Activated CD4-positive, alpha-beta T cell treated with anti-CD3 and anti-CD28 coated beads for 36 hours (primary cell): ENCODE measurements at regions of chr15 and their contacts with region 1.

Region 1: DNA sequence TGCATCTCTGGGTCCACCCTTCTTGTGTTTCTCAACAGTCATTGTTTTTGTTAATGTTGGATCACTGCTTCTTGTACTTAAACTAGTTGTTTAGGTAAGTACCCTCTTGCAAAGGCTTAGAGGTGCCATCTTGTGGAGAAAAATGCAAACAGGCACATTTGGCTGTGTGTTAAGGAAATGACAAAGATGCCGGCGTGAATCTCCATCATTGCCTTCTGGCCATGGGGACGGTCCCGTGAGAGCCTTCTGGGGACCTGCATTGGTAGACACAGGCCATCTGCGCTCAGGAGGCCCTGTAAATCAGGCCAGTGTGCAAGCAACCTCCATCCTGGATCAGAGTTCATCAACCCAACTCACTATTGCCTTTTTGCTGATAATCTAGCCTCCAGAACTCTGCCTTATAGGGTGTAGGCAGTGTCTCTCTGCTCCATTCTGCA is 158.6 kb upstream of the NR2E3 start:
- DNase-seq: peak; percentile 33
- ATAC-seq: no peak
- H3K4me3 Mint-ChIP-seq: no peak overlapping the region
- H3K27ac Mint-ChIP-seq: no peak overlapping the region
- H3K4me1 Mint-ChIP-seq: no peaks in the 10 kb centered on the region
- H3K27me3 Mint-ChIP-seq: peaks cover 4% of the 10 kb centered on the region

Region 2: DNA sequence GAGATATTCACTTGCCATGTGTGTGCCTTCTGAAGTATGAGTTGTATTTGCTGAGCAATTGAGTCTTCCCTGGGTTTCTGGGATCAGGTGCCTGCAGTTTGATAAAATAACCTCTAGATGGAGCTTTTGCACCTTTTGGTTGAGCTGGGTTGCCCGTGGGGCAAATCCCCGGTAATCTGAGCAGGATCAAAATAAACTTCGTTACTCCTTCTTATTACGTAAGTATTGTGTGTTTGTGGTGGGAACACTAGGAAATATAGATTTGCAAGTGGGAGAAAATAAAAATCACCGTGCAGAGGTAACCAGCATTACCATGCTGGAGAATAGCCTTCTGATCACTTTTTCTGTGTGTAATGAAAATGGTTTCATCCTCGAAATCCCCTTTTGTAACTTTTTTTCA is 118.8 kb before region 1 on chr15:
- CTCF ChIA-PET with region 1: no interaction called
- POLR2A ChIA-PET with region 1: no interaction called
- intact Hi-C with region 1: loop called in 1 of 2 experiments (anchors 1 kb)
- DNase-seq: peak; percentile 6
- ATAC-seq: no peak
- H3K4me3 Mint-ChIP-seq: no peak overlapping the region
- H3K27ac Mint-ChIP-seq: no peak overlapping the region
- H3K4me1 Mint-ChIP-seq: no peaks in the 10 kb centered on the region
- H3K27me3 Mint-ChIP-seq: peaks cover 24% of the 10 kb centered on the region